ENCODE measurements at regions of chr7 and their contacts with region 1.

Region 1: GRCh38 chr7:1044191-1045068 is at the start of gene GPR146:
- DNase-seq: peak; percentile 95
- H3K4me3 ChIP-seq: peak within 1 kb of the TSS; percentile 47 to 74 (median 51)
- H3K27ac ChIP-seq: peak within 1 kb of the TSS; percentile 65
- H3K4me1 ChIP-seq: peaks cover 15% of the 10 kb centered on the region
- H3K27me3 ChIP-seq: no peaks in the 10 kb centered on the region
- CTCF ChIP-seq: peak; percentile 43 to 73
- total RNA-seq, gene GPR146: 0.17 to 0.61 TPM

Region 2: DNA sequence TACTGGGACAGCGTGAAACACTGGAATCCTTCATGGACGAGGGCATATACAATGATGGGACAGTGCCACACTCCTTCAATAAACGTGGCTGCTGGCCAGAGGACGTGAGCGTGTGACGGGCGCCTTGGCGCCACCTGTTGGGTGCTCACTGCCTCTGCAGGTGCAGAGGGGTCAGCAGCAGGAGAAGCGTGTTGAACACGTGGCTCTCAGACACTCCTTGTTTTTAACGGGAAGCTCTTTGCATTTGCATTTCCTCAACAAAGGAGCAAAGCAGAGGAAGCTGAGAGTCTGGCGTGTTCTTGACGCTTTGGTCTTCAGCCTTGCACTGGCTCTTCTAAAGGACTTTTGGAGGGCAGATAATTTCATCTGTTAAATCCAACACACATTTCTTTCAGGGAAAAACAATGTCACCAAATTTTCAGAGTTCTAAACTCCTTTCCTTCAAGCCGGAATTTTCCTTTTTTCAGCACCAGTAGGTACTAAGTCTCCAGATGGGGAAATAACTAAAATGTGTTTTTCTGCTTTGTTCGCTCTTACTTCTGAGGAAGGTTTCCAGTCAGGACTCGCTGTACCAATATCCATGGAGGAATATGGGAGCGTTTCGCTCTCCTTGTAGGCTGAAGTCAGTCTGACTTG is 170.9 kb before region 1 on chr7:
- CTCF ChIA-PET with region 1: no interaction called
- dilution Hi-C with region 1: no loop called
- in situ Hi-C with region 1: no loop called
- intact Hi-C with region 1: no loop called
- DNase-seq: peak; percentile 75
- H3K4me3 ChIP-seq: no peak overlapping the region
- H3K27ac ChIP-seq: peak overlapping the region; percentile 25
- H3K4me1 ChIP-seq: peaks cover 6% of the 10 kb centered on the region
- H3K27me3 ChIP-seq: no peaks in the 10 kb centered on the region
- CTCF ChIP-seq: peak; percentile 97

Region 3: DNA sequence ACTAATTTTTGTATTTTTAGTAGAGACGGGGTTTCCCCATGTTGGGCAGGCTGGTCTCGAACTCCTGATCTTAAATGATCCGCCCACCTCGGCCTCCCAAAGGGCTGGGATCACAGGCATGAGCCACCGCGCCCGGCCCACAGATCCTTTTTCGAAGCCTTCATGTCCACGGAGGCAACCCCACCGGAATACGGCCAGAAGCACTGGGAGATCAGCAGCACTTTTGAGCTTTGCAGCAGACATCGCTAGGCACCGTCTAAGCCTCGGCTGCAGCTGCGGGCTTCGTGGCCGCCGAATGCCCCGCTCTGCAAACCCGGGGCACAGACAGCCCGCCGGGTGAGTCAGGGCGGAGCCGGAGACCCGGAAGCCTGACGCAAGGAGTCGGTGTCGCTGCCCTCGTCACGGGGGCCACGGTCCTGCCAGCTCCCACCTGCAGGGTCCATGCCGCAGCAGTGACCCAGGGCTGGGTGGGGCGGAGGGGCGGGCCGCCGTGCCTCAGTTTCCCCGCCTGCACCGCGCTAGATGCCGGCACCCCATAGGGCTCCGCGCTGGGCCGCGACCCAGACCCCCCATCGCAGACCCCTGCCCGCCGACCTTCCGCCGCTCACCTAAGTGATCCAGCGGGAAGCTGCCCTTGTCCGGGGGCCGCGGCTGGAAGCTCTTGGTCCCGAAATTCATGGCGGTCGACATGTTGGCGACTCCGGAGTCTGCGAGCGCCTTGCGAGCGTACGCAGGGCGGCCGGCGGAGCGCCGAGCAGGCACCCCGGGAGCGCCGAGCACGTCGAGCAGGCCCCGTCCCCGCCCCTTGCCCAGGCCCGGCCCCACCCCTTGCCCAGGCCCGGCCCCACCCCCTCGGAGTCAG is 69.4 kb before region 1 on chr7 and contains the start of gene COX19:
- CTCF ChIA-PET with region 1: no interaction called
- dilution Hi-C with region 1: loop called (anchors 5 kb)
- in situ Hi-C with region 1: no loop called
- intact Hi-C with region 1: no loop called
- DNase-seq: peak; percentile 80
- H3K4me3 ChIP-seq: peak within 1 kb of the TSS; percentile 54 to 100 (median 88)
- H3K27ac ChIP-seq: peak within 1 kb of the TSS; percentile 85
- H3K4me1 ChIP-seq: peaks cover 12% of the 10 kb centered on the region
- H3K27me3 ChIP-seq: no peaks in the 10 kb centered on the region
- CTCF ChIP-seq: no peak
- total RNA-seq, gene COX19: 11.2 to 15.9 TPM

Region 4: GRCh38 chr7:1094870-1095269 is 50.4 kb after region 1 on chr7:
- CTCF ChIA-PET with region 1: interaction called, 16 read pairs
- dilution Hi-C with region 1: no loop called
- in situ Hi-C with region 1: no loop called
- intact Hi-C with region 1: no loop called
- DNase-seq: no peak
- H3K4me3 ChIP-seq: no peak overlapping the region
- H3K27ac ChIP-seq: no peak overlapping the region
- H3K4me1 ChIP-seq: no peaks in the 10 kb centered on the region
- H3K27me3 ChIP-seq: no peaks in the 10 kb centered on the region
- CTCF ChIP-seq: no peak

Region 5: DNA sequence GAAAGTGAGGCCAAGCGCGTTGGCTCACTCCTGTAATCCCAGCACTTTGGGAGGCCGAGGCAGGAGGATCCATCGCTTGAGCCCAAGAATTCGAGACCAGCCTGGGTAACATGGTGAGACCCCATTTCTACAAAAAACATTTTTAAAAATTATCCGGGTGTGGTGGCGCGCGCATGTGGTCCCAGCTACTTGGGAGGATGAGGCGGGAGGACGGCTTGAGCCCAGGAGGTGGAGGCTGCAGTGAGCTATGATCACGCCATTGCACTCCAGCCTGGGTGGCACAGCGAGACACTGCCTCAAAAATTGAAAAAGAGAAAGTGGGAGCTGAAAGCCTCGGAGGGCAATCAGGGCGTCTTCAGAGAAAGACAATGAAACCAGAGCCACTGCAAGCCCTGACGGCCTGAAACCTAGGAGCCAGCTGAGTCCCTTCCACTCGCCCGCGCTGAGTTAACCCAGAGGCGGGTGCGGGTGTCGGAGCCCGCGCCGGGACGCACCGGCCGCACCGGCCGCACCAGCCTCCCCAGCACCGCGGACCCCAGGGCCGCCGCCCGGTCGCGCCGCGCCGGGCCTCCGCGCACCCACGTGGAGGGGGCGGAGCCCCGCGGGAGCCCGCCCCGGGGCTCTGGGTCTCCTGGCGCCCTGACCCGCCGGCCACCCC is 93.2 kb after region 1 on chr7:
- CTCF ChIA-PET with region 1: no interaction called
- dilution Hi-C with region 1: loop called (anchors 5 kb)
- in situ Hi-C with region 1: no loop called
- intact Hi-C with region 1: no loop called
- DNase-seq: peak; percentile 21
- H3K4me3 ChIP-seq: peak overlapping the region; percentile 79 to 90 (median 89)
- H3K27ac ChIP-seq: peak overlapping the region; percentile 93
- H3K4me1 ChIP-seq: peaks cover 6% of the 10 kb centered on the region
- H3K27me3 ChIP-seq: no peaks in the 10 kb centered on the region
- CTCF ChIP-seq: no peak

Region 6: DNA sequence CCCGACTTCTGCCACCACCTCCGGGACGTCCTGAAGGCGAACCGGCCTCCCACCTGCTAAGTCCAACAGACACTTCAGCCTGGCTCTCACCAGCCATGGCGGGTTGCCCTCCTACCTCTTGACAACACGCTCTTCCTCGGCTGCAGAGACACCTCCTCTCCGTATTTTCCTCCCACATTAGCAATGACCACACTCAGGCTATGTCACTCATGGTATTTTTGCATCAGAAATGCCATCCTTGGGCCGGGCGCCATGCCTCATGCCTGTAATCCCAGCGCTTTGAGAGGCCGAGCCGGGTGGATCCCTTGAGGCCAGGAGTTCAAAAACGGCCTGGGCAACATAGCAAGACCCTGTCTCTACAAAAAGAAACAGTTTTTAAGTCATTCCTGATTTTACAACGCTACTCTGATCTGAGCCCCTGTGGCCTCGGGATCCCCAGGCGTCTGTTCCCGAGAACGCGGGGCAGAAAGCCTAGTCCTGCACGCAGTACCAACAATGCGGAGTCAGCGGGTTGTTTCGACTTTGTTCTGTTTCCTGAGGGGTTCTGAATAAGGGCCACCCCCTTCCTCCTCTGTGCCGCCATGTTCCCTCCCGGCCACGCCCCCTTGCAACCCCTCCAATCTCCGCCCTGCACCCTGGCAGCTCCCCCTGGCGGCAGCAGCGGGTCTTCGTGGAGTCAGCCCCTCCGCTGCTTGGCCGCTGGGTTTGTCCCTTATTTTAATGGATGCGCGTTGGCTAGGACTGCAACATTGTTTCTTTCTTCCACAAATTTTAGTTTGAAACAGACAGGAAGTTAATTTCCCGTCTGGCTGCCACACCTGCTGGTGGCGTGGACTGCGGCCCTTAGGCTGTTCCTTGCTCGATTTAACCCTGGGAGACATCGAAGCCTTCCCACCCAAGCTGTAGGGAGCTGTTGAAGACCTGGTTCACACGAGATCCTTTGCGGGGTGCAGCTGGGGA is 125.3 kb after region 1 on chr7:
- CTCF ChIA-PET with region 1: no interaction called
- dilution Hi-C with region 1: loop called (anchors 5 kb)
- in situ Hi-C with region 1: no loop called
- intact Hi-C with region 1: no loop called
- DNase-seq: peak; percentile 57
- H3K4me3 ChIP-seq: peak overlapping the region; percentile 24 to 65 (median 43)
- H3K27ac ChIP-seq: peak overlapping the region; percentile 21
- H3K4me1 ChIP-seq: no peaks in the 10 kb centered on the region
- H3K27me3 ChIP-seq: no peaks in the 10 kb centered on the region
- CTCF ChIP-seq: peak; percentile 77 to 83